CD8-positive, alpha-beta T cell (primary cell): ENCODE measurements at regions of chr12 and their contacts with region 1.

Region 1: DNA sequence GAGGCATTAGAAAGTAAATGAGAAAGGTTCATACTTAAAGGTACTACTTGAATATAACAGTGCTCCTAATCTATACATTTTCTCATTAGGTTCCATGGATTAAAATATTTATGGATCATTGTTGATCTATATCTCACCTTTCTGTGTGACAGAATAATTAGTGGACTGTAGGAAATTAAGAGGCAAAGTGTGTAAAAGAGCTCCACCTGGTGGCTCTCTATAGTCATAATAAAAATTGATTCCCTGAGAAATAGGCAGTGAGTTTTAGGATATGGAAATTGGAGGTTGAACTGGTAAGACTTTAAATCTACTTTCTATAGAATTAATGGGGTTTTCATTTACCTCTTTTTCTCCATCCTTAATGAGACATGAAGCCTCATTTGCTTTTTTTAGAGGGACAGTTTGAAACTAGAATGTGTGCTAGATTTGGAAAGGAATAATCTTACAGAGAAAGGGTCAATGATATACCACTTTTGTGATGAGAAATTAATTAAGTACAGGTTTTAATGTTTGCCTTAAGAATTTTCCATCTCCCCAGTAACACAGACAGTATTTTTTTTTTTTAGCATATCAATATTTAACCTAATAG is 11.8 kb upstream of the DERA start:
- DNase-seq: peak in 2 of 9 experiments; percentile 46 to 62
- ATAC-seq: peak; percentile 44
- H3K4me3 ChIP-seq: no peak overlapping the region
- H3K4me3 Mint-ChIP-seq: no peak overlapping the region
- H3K27ac ChIP-seq: no peak overlapping the region
- H3K27ac Mint-ChIP-seq: peak overlapping the region; percentile 74
- H3K4me1 ChIP-seq: no peaks in the 10 kb centered on the region
- H3K4me1 Mint-ChIP-seq: peaks cover 6% of the 10 kb centered on the region
- H3K27me3 ChIP-seq: no peaks in the 10 kb centered on the region
- H3K27me3 Mint-ChIP-seq: no peaks in the 10 kb centered on the region
- CTCF ChIP-seq: peak; percentile 94

Region 2: GRCh38 chr12:15772405-15773018 is 126.9 kb before region 1 on chr12:
- CTCF ChIA-PET with region 1: no interaction called
- POLR2A ChIA-PET with region 1: no interaction called
- intact Hi-C with region 1: loop called (anchors 5 kb)
- DNase-seq: peak in 2 of 9 experiments; percentile 28 to 45
- ATAC-seq: no peak
- H3K4me3 ChIP-seq: no peak overlapping the region
- H3K4me3 Mint-ChIP-seq: no peak overlapping the region
- H3K27ac ChIP-seq: no peak overlapping the region
- H3K27ac Mint-ChIP-seq: no peak overlapping the region
- H3K4me1 ChIP-seq: no peaks in the 10 kb centered on the region
- H3K4me1 Mint-ChIP-seq: no peaks in the 10 kb centered on the region
- H3K27me3 ChIP-seq: no peaks in the 10 kb centered on the region
- H3K27me3 Mint-ChIP-seq: peaks cover 12% of the 10 kb centered on the region
- CTCF ChIP-seq: peak; percentile 39

Region 3: DNA sequence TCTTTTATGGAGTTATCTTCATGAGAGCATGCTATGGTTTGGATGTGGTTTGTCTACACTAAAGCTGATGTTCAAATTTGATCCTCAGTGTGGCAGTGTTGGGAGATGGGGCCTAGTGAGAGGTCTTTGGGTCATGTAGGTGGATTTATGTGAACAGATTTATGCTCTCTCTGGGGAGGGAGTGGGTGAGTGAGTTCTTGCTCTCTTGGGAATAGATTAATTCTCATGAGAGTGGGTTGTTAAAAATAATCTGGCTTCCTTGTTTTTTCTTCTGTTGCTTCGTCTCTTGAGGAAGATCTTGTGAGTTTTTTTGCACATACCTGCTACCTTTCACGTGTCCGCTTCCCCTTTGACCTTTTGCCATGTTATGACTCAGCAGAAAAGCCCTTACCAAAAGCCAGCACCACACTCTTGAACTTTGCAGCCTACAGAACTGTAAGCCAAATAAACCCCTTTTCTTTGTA is 32.2 kb after region 1 on chr12:
- CTCF ChIA-PET with region 1: no interaction called
- POLR2A ChIA-PET with region 1: no interaction called
- intact Hi-C with region 1: no loop called
- DNase-seq: no peak
- ATAC-seq: no peak
- H3K4me3 ChIP-seq: no peak overlapping the region
- H3K4me3 Mint-ChIP-seq: no peak overlapping the region
- H3K27ac ChIP-seq: no peak overlapping the region
- H3K27ac Mint-ChIP-seq: no peak overlapping the region
- H3K4me1 ChIP-seq: no peaks in the 10 kb centered on the region
- H3K4me1 Mint-ChIP-seq: no peaks in the 10 kb centered on the region
- H3K27me3 ChIP-seq: no peaks in the 10 kb centered on the region
- H3K27me3 Mint-ChIP-seq: no peaks in the 10 kb centered on the region
- CTCF ChIP-seq: no peak